ENCODE measurements at regions of chr4 and their contacts with region 1.

Region 1: GRCh38 chr4:156799121-156799589 is 172.4 kb downstream of the PDGFC start:
- DNase-seq: no peak
- H3K4me3 ChIP-seq: no peak overlapping the region
- H3K27ac ChIP-seq: no peak overlapping the region
- H3K27me3 ChIP-seq: no peaks in the 10 kb centered on the region
- CTCF ChIP-seq: no peak

Region 2: DNA sequence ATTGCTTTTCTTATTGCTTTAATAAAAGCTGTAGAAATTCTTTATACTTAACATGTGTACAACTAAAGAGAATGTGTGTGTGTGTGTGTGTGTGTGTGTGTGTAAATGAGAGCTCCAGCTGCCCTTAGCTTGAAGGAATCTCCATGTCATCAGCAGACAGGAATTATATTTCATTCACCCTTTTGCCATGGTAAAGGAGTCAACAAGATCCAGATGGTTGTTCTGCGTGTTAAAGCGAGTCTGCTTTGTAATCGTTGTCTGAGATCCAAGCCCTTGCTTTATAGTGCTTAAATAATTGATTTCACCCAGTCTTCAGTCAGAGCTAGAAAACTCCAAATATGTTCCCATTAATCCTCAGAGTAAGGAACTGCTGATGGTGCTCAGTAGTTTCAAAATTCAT is 113.0 kb before region 1 on chr4:
- CTCF ChIA-PET with region 1: no interaction called
- POLR2A ChIA-PET with region 1: no interaction called
- DNase-seq: peak; percentile 94
- H3K4me3 ChIP-seq: no peak overlapping the region
- H3K27ac ChIP-seq: no peak overlapping the region
- H3K27me3 ChIP-seq: no peaks in the 10 kb centered on the region
- CTCF ChIP-seq: no peak

Region 3: GRCh38 chr4:156870861-156871260 is 71.7 kb after region 1 on chr4:
- CTCF ChIA-PET with region 1: no interaction called
- POLR2A ChIA-PET with region 1: interaction called, 11 read pairs
- DNase-seq: no peak
- H3K4me3 ChIP-seq: no peak overlapping the region
- H3K27ac ChIP-seq: no peak overlapping the region
- H3K27me3 ChIP-seq: no peaks in the 10 kb centered on the region
- CTCF ChIP-seq: no peak

Measured in AG04450 (cell line).